ENCODE measurements at regions of chr17 and their contacts with region 1.

Region 1: DNA sequence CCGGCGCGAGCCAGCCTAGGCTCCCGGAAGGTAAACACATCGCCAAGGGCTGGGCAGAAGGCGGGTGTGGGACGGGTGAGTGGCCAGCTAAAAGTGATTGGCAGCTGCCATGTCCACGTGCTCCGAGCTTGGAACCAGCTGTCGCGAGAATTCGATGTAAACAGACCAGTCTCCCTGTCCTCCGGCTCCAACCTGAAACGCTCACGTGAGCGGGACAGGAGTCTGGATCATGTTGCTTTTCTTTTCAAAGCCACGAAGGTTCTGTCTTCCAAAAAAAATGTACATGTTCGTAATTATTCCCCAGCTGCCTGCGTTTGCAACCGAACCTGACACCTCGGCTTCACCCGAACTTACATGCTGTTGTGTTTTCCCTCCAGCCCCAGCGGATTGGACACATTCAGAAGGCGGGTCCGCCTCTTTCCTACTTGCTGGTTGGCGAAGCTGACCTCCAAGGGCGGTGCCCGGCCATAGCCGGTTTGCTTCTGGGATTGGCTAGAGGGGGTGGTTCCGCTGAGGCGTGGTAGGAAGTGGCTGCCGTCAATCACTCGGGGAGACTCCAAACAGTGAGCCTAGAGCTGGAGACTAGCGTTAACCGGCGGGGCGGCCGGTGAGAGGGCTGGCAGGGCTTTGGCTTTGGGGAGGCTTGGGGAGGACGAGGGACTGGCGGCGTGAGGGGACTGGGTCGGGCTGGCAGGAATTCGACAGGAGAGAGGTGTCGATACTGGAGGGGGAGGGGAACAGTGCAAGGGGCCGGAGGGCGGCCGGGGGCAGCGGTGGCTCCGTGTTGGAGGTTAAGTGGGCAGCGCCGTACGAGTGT is at the start of gene BCAS3:
- DNase-seq: peak; percentile 82 to 98 (median 97)
- ATAC-seq: peak; percentile 97
- H3K4me3 ChIP-seq: peak within 1 kb of the TSS; percentile 85
- H3K4me3 Mint-ChIP-seq: peak within 1 kb of the TSS; percentile 95 to 99 (median 98)
- H3K27ac ChIP-seq: peak within 1 kb of the TSS; percentile 84
- H3K27ac Mint-ChIP-seq: peak within 1 kb of the TSS; percentile 91 to 99 (median 96)
- H3K4me1 ChIP-seq: peaks cover 0 to 5% of the 10 kb centered on the region in 2 donors
- H3K4me1 Mint-ChIP-seq: peaks cover 10 to 30% (median 25%) of the 10 kb centered on the region in 7 donors
- H3K27me3 ChIP-seq: no peaks in the 10 kb centered on the region
- H3K27me3 Mint-ChIP-seq: no peaks in the 10 kb centered on the region
- total RNA-seq, gene BCAS3: 18.4 to 57.8 (median 42.3) TPM

Region 2: DNA sequence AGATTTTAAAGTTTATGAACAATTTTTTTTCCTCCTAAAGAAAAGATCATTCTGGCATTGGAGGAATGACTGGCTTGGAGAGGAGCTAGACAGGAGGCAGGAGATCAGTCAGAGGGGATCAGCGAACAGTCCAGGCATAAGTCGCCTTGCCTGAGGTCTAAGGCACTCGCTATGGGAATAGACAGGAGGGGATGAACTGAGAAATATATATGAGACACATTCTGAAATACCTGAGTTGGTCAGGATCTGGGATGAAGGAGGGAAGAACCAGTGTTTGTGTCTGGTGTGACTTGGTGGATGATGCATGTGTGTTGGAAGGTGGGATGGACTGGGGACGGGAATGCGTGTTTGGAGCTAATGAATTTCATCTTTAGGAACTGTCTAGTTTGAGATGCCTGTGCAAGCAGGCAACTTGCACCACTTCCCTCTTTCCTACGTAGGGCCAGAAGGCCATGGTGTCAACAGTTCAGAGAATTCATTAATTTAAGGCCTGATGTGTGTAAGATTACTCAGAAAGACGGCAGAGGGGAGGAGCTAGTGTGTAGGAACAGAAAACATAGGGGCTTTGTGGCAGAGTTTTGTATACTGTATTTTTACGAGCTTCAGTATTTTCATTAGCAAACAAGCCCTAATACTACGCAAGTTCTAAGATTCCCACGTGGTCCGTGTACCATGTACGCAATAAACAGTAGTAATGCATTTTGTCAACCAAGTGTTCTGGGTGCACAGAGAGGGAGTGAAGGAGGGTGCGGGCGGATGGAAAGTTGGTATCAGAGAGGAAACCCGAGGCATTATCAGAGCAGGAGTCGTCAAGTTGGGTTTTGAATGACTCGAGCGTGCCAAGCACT is 599.6 kb before region 1 on chr17:
- CTCF ChIA-PET with region 1: no interaction called
- POLR2A ChIA-PET with region 1: no interaction called
- intact Hi-C with region 1: loop called in 1 of 2 experiments (anchors 1 kb)
- DNase-seq: peak in 5 of 9 donors; percentile 30 to 41 (median 35)
- ATAC-seq: peak; percentile 66
- H3K4me3 ChIP-seq: peak overlapping the region; percentile 82
- H3K4me3 Mint-ChIP-seq: peak overlapping the region; percentile 86 to 97 (median 94)
- H3K27ac ChIP-seq: peak overlapping the region; percentile 70
- H3K27ac Mint-ChIP-seq: peak overlapping the region; percentile 82 to 97 (median 87)
- H3K4me1 ChIP-seq: peaks cover 8 to 14% of the 10 kb centered on the region in 2 donors
- H3K4me1 Mint-ChIP-seq: peaks cover 17 to 41% (median 28%) of the 10 kb centered on the region in 7 donors
- H3K27me3 ChIP-seq: no peaks in the 10 kb centered on the region
- H3K27me3 Mint-ChIP-seq: no peaks in the 10 kb centered on the region

Region 3: GRCh38 chr17:60421273-60421934 is 256.1 kb before region 1 on chr17:
- CTCF ChIA-PET with region 1: no interaction called
- POLR2A ChIA-PET with region 1: interaction called, 3 read pairs
- intact Hi-C with region 1: loop called in 1 of 2 experiments (anchors 1 kb)
- DNase-seq: peak; percentile 52 to 77 (median 68)
- ATAC-seq: peak; percentile 95
- H3K4me3 ChIP-seq: peak overlapping the region; percentile 63
- H3K4me3 Mint-ChIP-seq: peak overlapping the region; percentile 59 to 88 (median 80)
- H3K27ac ChIP-seq: peak overlapping the region; percentile 38
- H3K27ac Mint-ChIP-seq: peak overlapping the region in 8 of 9 donors; percentile 17 to 82 (median 76)
- H3K4me1 ChIP-seq: peaks cover 4% of the 10 kb centered on the region in 2 donors
- H3K4me1 Mint-ChIP-seq: peaks cover 0 to 11% (median 10%) of the 10 kb centered on the region in 7 donors
- H3K27me3 ChIP-seq: no peaks in the 10 kb centered on the region
- H3K27me3 Mint-ChIP-seq: peaks cover 0 to 7% (median 0%) of the 10 kb centered on the region in 5 donors

Region 4: GRCh38 chr17:60599620-60600489 is 77.7 kb before region 1 on chr17 and contains the start of gene PPM1D:
- CTCF ChIA-PET with region 1: interaction called, 3 read pairs
- POLR2A ChIA-PET with region 1: interaction called, 11 read pairs
- intact Hi-C with region 1: loop called (anchors 1 kb)
- DNase-seq: peak; percentile 92 to 97 (median 95)
- ATAC-seq: peak; percentile 97
- H3K4me3 ChIP-seq: peak within 1 kb of the TSS; percentile 70
- H3K4me3 Mint-ChIP-seq: peak within 1 kb of the TSS; percentile 93 to 99 (median 97)
- H3K27ac ChIP-seq: peak within 1 kb of the TSS; percentile 88
- H3K27ac Mint-ChIP-seq: peak within 1 kb of the TSS; percentile 91 to 99 (median 95)
- H3K4me1 ChIP-seq: peaks cover 0 to 13% of the 10 kb centered on the region in 2 donors
- H3K4me1 Mint-ChIP-seq: peaks cover 33 to 55% (median 43%) of the 10 kb centered on the region in 7 donors
- H3K27me3 ChIP-seq: no peaks in the 10 kb centered on the region
- H3K27me3 Mint-ChIP-seq: no peaks in the 10 kb centered on the region
- total RNA-seq, gene PPM1D: 13.5 to 18.8 (median 17.7) TPM

Region 5: DNA sequence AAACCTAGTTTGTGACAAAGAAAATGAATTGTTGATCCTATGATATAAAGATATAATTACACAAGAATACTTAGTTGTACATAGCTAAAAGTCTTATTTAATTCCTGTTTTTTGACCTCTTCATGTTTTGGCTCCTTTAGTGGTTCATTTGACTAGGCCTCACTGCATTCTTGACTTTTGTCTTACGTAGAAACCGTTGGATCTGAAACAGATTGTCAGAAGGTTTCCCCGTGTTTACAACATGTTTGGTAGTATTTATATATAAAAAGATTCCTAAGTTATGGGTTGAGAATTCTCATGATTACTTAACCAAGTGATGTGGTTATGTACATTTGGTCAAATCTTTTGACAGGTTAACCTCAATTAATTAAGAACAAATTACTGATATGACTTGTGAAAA is 162.9 kb after region 1 on chr17:
- CTCF ChIA-PET with region 1: no interaction called
- POLR2A ChIA-PET with region 1: no interaction called
- intact Hi-C with region 1: no loop called
- DNase-seq: no peak
- ATAC-seq: no peak
- H3K4me3 ChIP-seq: no peak overlapping the region
- H3K4me3 Mint-ChIP-seq: no peak overlapping the region
- H3K27ac ChIP-seq: no peak overlapping the region
- H3K27ac Mint-ChIP-seq: no peak overlapping the region
- H3K4me1 ChIP-seq: no peaks in the 10 kb centered on the region
- H3K4me1 Mint-ChIP-seq: peaks cover 0 to 4% (median 0%) of the 10 kb centered on the region in 7 donors
- H3K27me3 ChIP-seq: no peaks in the 10 kb centered on the region
- H3K27me3 Mint-ChIP-seq: no peaks in the 10 kb centered on the region

Region 6: GRCh38 chr17:61412143-61412859 is 734.8 kb after region 1 on chr17:
- CTCF ChIA-PET with region 1: no interaction called
- POLR2A ChIA-PET with region 1: no interaction called
- intact Hi-C with region 1: loop called in 1 of 2 experiments (anchors 5 kb)
- DNase-seq: peak; percentile 59 to 91 (median 81)
- ATAC-seq: peak; percentile 88
- H3K4me3 ChIP-seq: peak overlapping the region; percentile 64
- H3K4me3 Mint-ChIP-seq: peak overlapping the region in 9 of 10 donors; percentile 56 to 85 (median 76)
- H3K27ac ChIP-seq: peak overlapping the region; percentile 37
- H3K27ac Mint-ChIP-seq: no peak overlapping the region
- H3K4me1 ChIP-seq: peaks cover 7 to 15% of the 10 kb centered on the region in 2 donors
- H3K4me1 Mint-ChIP-seq: peaks cover 12 to 31% (median 23%) of the 10 kb centered on the region in 7 donors
- H3K27me3 ChIP-seq: peaks cover 0 to 23% of the 10 kb centered on the region in 2 donors
- H3K27me3 Mint-ChIP-seq: peaks cover 22 to 59% (median 28%) of the 10 kb centered on the region in 5 donors

Region 7: DNA sequence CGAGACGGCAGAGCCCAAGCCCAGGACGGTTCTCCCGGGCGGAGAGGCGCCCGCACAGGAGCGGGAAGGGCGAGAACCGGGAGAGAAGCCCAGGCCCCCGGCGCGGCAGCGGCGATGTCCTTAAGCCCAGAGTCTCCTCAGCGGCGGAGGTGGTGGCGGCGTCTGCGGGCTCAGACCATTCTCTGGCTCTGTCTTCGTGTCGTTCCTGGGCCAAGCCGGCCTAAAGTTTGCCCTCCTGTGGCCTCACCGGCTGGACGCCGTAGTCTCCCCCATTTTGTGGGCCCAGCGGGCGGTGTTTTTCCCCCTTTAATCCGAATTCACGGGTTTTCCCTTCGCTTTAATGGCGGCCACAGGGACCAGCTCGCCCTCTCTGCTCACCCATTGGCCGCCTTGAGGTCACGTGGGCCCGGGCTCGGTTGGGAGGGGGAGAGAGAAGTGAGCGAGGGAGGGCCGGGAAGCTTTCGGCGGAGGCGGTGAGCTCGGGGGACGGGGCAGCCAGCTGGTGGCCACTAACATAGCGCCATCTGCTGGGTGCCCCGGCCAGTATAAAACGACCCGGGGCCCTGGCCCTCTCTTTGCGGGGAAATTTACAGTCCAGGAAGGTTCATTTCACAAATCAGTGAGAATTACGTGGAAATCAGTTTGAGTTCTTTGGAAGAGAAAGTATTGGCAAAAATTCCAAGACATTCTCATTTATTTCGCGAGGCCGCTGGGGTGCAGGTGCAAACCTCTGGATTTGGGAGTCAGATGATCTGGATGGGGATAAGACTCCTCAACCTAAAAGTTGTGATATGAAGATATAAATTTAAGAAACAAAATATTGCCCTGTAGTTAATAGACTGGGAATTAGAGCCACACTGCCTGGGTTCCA is 1388.3 kb after region 1 on chr17:
- CTCF ChIA-PET with region 1: no interaction called
- POLR2A ChIA-PET with region 1: no interaction called
- intact Hi-C with region 1: loop called (anchors 2 kb)
- DNase-seq: peak; percentile 91 to 97 (median 96)
- ATAC-seq: peak; percentile 97
- H3K4me3 ChIP-seq: peak overlapping the region; percentile 88
- H3K4me3 Mint-ChIP-seq: peak overlapping the region; percentile 93 to 99 (median 96)
- H3K27ac ChIP-seq: peak overlapping the region; percentile 100
- H3K27ac Mint-ChIP-seq: peak overlapping the region; percentile 92 to 100 (median 96)
- H3K4me1 ChIP-seq: peaks cover 16 to 23% of the 10 kb centered on the region in 2 donors
- H3K4me1 Mint-ChIP-seq: peaks cover 24 to 40% (median 34%) of the 10 kb centered on the region in 7 donors
- H3K27me3 ChIP-seq: no peaks in the 10 kb centered on the region
- H3K27me3 Mint-ChIP-seq: no peaks in the 10 kb centered on the region

Measured in naive thymus-derived CD4-positive, alpha-beta T cell (primary cell).